ENCODE measurements at regions of chr11 and their contacts with region 1.

Region 1: DNA sequence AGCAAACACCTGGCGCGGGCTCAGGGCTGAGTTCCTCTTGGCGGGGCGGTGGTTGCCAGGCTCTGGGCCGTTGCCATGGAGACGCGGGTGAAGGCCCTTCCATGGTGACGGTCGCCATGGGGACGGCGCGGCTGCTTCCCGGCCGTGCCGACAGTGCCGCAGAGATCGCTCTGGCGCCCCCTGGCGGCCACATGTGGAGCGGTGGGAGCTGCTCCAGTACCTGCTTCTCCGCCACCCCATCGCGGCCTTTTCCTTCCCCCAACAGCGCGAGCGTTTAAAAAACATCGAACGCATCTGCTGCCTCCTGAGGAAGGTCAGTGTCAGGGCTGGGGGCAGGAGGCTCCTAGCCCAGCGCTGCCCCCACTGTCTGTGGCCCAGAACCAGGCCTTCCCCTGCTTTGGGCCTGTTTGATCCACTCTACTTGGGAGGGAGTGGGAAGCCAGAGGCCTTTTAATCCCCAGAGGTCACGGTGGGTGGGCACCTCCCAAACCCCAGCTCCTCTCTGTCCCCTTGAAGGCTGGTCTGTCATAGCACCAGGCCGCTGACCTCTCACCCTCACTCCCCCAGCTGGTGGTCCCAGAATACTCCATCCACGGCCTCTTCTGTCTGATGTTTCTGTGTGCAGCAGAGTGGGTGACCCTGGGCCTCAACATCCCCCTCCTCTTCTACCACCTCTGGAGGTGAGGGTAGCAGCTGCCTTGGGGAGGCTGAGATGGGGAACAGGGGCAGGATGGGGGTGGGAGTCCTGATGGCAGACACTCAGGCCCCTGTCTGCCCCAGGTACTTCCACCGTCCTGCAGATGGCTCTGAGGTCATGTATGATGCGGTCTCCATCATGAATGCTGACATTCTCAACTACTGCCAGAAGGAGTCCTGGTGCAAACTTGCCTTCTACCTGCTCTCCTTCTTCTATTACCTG is 4.8 kb downstream of the CNIH2 start:
- DNase-seq: peak; percentile 93 to 100
- H3K4me3 ChIP-seq: no peak overlapping the region; a peak in 2 of 8 replicates
- H3K27ac ChIP-seq: no peak overlapping the region; the same call in 1 of the 2 replicates
- H3K4me1 ChIP-seq: peaks cover 0 to 16% (median 13%) of the 10 kb centered on the region in 4 experiments; a peak in 5 of 7 replicates
- H3K27me3 ChIP-seq: peaks cover 0 to 4% (median under 1%) of the 10 kb centered on the region in 4 experiments; a peak in 2 of 7 replicates
- CTCF ChIP-seq: peak; percentile 91 to 95 (median 95)
- EP300 ChIP-seq: peak in 1 of 2 experiments; percentile 23; a peak in 2 of 3 replicates
- POLR2A ChIP-seq: 0 out of 3 replicates have a peak, but pooled peaks of 1 of the 2 experiments have one; percentile 28
- RAD21 ChIP-seq: peak; percentile 55 to 72

Region 2: GRCh38 chr11:66222358-66223149 is 60.2 kb before region 1 on chr11:
- CTCF ChIA-PET with region 1: interaction called, 31 read pairs
- POLR2A ChIA-PET with region 1: interaction called, 3 read pairs
- DNase-seq: peak; percentile 93 to 95
- H3K4me3 ChIP-seq: no peak overlapping the region
- H3K27ac ChIP-seq: 0 out of 2 replicates have a peak overlapping the region, but pooled peaks have one; percentile 47
- H3K4me1 ChIP-seq: peaks cover 0 to 2% (median 0%) of the 10 kb centered on the region in 4 experiments; a peak in 1 of 7 replicates
- H3K27me3 ChIP-seq: no peaks in the 10 kb centered on the region
- CTCF ChIP-seq: peak; percentile 100
- EP300 ChIP-seq: 0 out of 3 replicates have a peak, but pooled peaks of 1 of the 2 experiments have one; percentile 4
- POLR2A ChIP-seq: no peak
- RAD21 ChIP-seq: peak; percentile 95 to 97

Region 3: GRCh38 chr11:66268283-66268951 is 14.3 kb before region 1 on chr11 and contains the start of gene RAB1B:
- CTCF ChIA-PET with region 1: interaction called, 48 read pairs
- POLR2A ChIA-PET with region 1: interaction called, 125 read pairs
- DNase-seq: peak; percentile 99 to 100
- H3K4me3 ChIP-seq: peak within 1 kb of the TSS; percentile 57 to 91 (median 82)
- H3K27ac ChIP-seq: peak within 1 kb of the TSS; percentile 92; the same call in 1 of the 2 replicates
- H3K4me1 ChIP-seq: peaks cover 0 to 5% (median 3%) of the 10 kb centered on the region in 4 experiments; a peak in 5 of 7 replicates
- H3K27me3 ChIP-seq: no peaks in the 10 kb centered on the region
- CTCF ChIP-seq: no peak; a peak in 1 of 4 replicates
- EP300 ChIP-seq: no peak
- POLR2A ChIP-seq: peak in 1 of 2 experiments; percentile 85; a peak in 2 of 3 replicates
- RAD21 ChIP-seq: no peak
- total RNA-seq, gene RAB1B: 100 and 106 TPM in 2 replicates

Region 4: DNA sequence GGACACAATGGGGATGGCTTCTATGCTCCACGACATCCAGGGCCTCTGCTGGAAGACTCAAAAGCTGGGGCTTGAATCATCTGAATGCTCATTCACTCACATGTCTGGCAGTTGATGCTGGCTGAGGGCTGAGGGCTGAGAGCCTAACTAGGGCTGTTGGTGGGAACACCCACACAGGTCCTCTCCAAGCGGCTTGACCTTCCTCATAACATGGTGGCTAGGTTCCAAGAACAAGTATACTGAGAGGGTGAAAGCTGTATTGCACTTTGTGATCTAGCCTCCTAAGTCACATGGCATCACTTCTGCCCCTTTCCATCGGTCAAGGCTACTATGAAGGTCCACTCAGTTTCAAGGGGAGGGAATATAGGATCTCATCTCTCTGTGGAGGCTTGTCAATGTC is 16.5 kb after region 1 on chr11:
- CTCF ChIA-PET with region 1: interaction called, 37 read pairs
- POLR2A ChIA-PET with region 1: interaction called, 5 read pairs
- DNase-seq: no peak
- H3K4me3 ChIP-seq: no peak overlapping the region
- H3K27ac ChIP-seq: no peak overlapping the region
- H3K4me1 ChIP-seq: peaks cover 4 to 13% (median 6%) of the 10 kb centered on the region in 4 experiments; a peak in 6 of 7 replicates
- H3K27me3 ChIP-seq: peaks cover 0 to 3% (median 0%) of the 10 kb centered on the region in 4 experiments; a peak in 1 of 7 replicates
- CTCF ChIP-seq: no peak
- EP300 ChIP-seq: no peak
- POLR2A ChIP-seq: no peak
- RAD21 ChIP-seq: no peak

Region 5: DNA sequence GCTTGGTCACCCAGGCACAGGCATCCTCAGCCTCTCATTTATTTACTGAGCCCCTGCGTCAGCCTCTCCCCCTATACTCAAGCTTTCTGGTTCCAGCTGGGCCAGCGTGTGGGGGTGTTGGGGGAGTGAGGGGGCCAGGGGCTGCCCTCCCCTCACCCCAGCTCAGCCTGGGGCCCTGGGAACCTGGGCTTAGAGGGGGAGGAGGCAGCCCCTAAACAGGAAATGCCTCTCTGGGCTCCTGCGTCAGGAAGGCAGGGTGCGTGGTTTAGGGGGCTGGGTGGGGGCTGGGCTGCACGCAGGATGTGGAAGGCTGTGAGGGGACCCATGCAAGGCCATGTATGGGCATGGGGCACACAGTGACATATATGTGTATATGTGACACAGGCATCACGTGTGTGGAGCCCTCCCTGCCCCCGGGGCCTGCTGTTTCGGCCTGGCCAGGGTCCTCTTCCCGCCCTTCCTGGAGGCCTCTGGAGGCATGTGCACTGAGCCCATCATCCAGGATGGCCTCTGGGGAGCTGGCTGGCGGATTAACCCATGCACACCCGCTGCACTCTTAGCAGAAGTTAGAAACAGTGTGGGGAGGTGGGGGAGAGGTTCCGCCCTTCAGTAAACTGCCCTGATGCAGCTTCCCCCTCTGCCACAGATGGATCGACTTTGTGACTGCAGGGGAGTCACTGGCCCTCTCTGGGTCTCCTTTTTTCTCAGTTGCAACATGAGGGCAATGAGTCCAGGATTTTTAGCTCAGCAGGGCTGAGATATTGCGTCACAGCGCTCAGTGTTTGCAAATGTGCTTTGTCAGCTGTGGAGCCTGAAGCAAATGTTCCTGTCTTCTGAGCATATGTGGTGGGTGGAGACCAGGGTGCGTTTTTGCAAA is 35.2 kb after region 1 on chr11:
- CTCF ChIA-PET with region 1: interaction called, 57 read pairs
- POLR2A ChIA-PET with region 1: interaction called, 9 read pairs
- DNase-seq: no peak
- H3K4me3 ChIP-seq: peak overlapping the region in 1 of 4 experiments; percentile 40; a peak in 1 of 8 replicates
- H3K27ac ChIP-seq: peak overlapping the region; percentile 32; the same call in 1 of the 2 replicates
- H3K4me1 ChIP-seq: peaks cover 9 to 28% (median 19%) of the 10 kb centered on the region in 4 experiments
- H3K27me3 ChIP-seq: peaks cover 0 to 5% (median 0%) of the 10 kb centered on the region in 4 experiments; a peak in 3 of 7 replicates
- CTCF ChIP-seq: no peak
- EP300 ChIP-seq: no peak
- POLR2A ChIP-seq: no peak
- RAD21 ChIP-seq: no peak

Region 6: DNA sequence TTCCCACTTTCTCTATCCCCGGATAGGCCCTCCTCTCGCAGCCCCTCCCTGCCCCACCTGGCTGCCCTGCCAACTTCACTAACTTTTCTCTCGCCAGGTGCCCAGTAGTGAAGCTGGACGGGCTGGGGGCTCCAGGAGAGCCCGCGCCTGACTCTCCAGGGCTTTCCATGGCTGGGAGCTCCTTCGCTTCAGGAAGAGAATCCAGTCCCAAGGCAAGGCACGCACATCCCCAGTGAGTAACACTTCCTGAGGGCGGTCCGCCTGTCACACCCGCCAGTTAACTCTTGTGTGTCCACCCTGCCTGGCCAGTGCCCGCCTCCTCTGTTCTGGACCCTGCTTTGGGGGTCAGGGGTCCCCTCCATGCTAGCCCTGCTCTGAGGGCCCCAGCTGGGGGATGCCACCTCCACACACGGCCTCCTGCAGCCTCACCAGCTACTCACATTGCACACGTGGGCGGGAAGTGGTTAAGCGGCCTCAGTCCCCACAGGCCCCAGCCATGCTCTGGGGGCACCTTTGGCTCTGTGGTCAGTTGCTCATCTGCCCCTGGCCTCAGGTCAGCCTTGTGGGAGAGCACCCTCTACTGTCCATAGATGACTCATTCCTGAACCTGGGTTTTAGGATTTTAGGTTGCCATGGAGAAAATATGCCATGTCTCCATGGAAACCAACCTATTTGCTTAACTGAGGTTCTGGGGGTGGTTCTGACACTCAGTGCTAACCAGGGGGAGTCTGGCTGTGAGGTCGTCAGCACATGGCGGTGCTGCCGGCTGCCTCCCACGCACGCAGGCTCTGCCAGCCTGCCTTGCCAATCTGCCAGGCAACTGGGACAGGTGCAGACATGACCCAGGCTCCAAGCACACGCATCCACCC is 53.7 kb after region 1 on chr11 and contains the start of gene RIN1:
- CTCF ChIA-PET with region 1: interaction called, 9 read pairs
- POLR2A ChIA-PET with region 1: interaction called, 10 read pairs
- DNase-seq: peak in 1 of 2 experiments; percentile 77
- H3K4me3 ChIP-seq: peak within 1 kb of the TSS; percentile 1 to 62 (median 48); a peak in 7 of 8 replicates
- H3K27ac ChIP-seq: 0 out of 2 replicates have a peak within 1 kb of the TSS, but pooled peaks have one; percentile 20
- H3K4me1 ChIP-seq: peaks cover 0 to 20% (median 14%) of the 10 kb centered on the region in 4 experiments; a peak in 6 of 7 replicates
- H3K27me3 ChIP-seq: no peaks in the 10 kb centered on the region; a peak in 2 of 7 replicates
- CTCF ChIP-seq: peak in 2 of 3 experiments; percentile 65 to 75; a peak in 3 of 4 replicates
- EP300 ChIP-seq: no peak
- POLR2A ChIP-seq: no peak; a peak in 1 of 3 replicates
- RAD21 ChIP-seq: peak; percentile 70 to 79
- total RNA-seq, gene RIN1: 5.4 and 6.6 TPM in 2 replicates

Region 7: DNA sequence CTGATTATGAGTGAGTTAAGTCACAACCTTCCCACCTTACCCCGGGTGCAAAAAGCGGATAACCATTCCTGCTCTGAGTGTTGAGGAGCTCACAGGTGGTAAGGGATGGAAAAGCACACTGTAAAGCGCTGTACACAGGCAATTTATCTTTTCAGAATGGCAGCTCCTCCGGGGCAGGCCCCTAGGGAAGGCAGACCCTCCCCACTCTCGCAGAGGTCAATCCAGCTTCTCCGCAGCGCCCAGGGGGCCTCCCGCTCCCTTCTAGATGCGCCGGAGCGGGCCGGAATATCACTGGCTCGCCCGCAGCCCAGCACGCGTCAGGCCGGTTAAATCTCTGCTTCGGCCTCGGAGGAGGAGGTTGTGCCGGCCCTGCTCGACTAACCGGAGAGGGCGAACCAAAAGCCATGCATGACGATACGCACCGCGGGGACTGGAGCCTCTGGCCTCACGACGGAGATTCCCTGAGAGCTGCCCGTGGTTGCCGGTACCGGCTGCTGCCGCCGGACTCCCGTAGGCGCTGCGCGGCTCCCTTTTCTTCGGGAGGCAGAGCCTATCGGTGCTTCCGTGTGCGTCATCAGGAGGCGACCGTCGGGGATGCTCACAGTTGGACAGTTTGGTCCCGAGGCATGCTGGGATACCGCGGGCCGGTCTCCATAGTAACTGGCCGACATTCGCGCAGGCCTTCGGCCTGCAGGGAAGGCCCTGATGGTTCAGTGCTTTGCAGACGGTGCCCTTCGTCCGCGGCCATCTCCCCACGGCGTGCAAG is 62.0 kb after region 1 on chr11 and contains the start of gene BRMS1:
- CTCF ChIA-PET with region 1: interaction called, 5 read pairs
- POLR2A ChIA-PET with region 1: interaction called, 20 read pairs
- DNase-seq: peak; percentile 86 to 98
- H3K4me3 ChIP-seq: peak within 1 kb of the TSS; percentile 75 to 100 (median 92)
- H3K27ac ChIP-seq: peak within 1 kb of the TSS; percentile 61; the same call in 1 of the 2 replicates
- H3K4me1 ChIP-seq: peaks cover 0 to 15% (median 9%) of the 10 kb centered on the region in 4 experiments; a peak in 6 of 7 replicates
- H3K27me3 ChIP-seq: peaks cover 0 to 2% (median 0%) of the 10 kb centered on the region in 4 experiments; a peak in 3 of 7 replicates
- CTCF ChIP-seq: no peak
- EP300 ChIP-seq: no peak
- POLR2A ChIP-seq: peak in 1 of 2 experiments; percentile 96; a peak in 2 of 3 replicates
- RAD21 ChIP-seq: no peak
- total RNA-seq, gene BRMS1: 44.8 and 46.1 TPM in 2 replicates